ENCODE measurements at regions of chr14 and their contacts with region 1.

Region 1: DNA sequence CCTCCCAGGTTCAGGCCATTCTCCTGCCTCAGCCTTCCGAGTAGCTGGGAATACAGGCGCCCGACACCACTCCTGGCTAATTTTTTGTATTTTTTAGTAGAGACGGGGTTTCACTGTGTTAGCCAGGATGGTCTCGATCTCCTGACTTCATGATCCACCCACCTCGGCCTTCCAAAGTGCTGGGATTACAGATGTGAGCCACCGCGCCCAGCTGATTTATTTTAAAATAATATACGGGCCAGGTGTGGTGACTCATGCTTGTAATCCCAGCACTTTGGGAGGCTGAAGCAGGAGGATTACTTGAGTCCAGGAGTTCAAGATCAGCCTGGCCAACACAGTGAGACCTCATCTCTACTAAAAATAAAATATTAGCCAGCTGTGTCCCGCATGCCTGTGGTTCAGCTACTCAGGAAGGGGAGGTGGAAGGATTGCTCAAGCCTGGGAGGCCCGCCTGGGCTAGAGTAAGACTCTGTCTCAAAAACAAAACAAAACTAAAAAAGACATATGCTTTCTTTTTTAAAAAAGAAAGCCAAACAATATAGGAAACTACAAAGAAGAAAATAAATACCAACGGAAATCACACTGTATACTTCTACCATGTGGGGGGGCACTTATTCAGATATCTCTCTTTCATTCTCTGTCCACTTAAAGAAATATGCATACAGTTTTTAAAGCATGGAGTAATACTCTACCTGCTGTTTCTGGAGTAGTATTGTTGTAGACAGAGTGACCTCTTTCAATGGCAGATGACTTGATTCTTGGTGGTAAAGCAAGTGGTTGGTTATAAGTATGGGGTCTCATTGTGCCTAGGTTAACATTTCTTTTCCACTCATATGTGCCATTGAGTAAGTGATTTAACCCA is 930 bp upstream of the MIA2 start:
- DNase-seq: no peak
- ATAC-seq: no peak
- H3K4me3 Mint-ChIP-seq: no peak overlapping the region
- H3K27ac Mint-ChIP-seq: no peak overlapping the region
- H3K4me1 Mint-ChIP-seq: no peaks in the 10 kb centered on the region
- H3K27me3 Mint-ChIP-seq: no peaks in the 10 kb centered on the region
- CTCF ChIP-seq: no peak

Region 2: DNA sequence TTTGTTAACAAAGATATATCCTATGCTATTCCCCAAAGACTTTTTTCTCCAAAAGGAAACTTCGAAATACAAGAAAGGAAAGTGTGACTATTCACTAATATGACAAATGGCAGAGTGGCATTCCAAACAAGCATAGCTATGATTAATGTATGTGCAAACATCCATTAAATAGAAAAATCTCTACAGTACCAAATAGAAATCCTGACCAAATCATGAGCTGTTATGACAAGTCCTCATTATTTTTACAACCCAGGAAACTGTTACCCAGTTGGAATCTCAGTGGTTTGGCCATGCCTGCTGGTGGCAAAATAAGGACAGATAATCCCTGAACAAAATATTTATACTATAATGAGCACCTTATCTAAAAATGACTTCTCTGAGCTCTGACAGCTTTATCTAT is 331.9 kb before region 1 on chr14:
- CTCF ChIA-PET with region 1: no interaction called
- POLR2A ChIA-PET with region 1: no interaction called
- intact Hi-C with region 1: no loop called
- DNase-seq: no peak
- ATAC-seq: no peak
- H3K4me3 Mint-ChIP-seq: no peak overlapping the region
- H3K27ac Mint-ChIP-seq: no peak overlapping the region
- H3K4me1 Mint-ChIP-seq: no peaks in the 10 kb centered on the region
- H3K27me3 Mint-ChIP-seq: no peaks in the 10 kb centered on the region
- CTCF ChIP-seq: no peak

Region 3: GRCh38 chr14:39426605-39427004 is 193.8 kb after region 1 on chr14:
- CTCF ChIA-PET with region 1: interaction called, 5 read pairs
- POLR2A ChIA-PET with region 1: interaction called, 3 read pairs
- intact Hi-C with region 1: loop called (anchors 1 kb)
- DNase-seq: no peak
- ATAC-seq: no peak
- H3K4me3 Mint-ChIP-seq: no peak overlapping the region
- H3K27ac Mint-ChIP-seq: no peak overlapping the region
- H3K4me1 Mint-ChIP-seq: peaks cover 54% of the 10 kb centered on the region
- H3K27me3 Mint-ChIP-seq: no peaks in the 10 kb centered on the region
- CTCF ChIP-seq: no peak

Region 4: GRCh38 chr14:39469094-39469710 is 236.4 kb after region 1 on chr14:
- CTCF ChIA-PET with region 1: interaction called, 5 read pairs
- POLR2A ChIA-PET with region 1: no interaction called
- intact Hi-C with region 1: loop called (anchors 5 kb)
- DNase-seq: peak; percentile 19
- ATAC-seq: peak; percentile 70
- H3K4me3 Mint-ChIP-seq: no peak overlapping the region
- H3K27ac Mint-ChIP-seq: no peak overlapping the region
- H3K4me1 Mint-ChIP-seq: no peaks in the 10 kb centered on the region
- H3K27me3 Mint-ChIP-seq: peaks cover 21% of the 10 kb centered on the region
- CTCF ChIP-seq: no peak